ENCODE measurements at regions of chr16 and their contacts with region 1.

Region 1: GRCh38 chr16:57899771-57900661 is 70.9 kb downstream of the CNGB1 start:
- DNase-seq: peak; percentile 59 to 89 (median 82)
- ATAC-seq: peak; percentile 76
- H3K4me3 ChIP-seq: no peak overlapping the region
- H3K4me3 Mint-ChIP-seq: no peak overlapping the region
- H3K27ac ChIP-seq: no peak overlapping the region
- H3K27ac Mint-ChIP-seq: no peak overlapping the region
- H3K4me1 ChIP-seq: no peaks in the 10 kb centered on the region
- H3K4me1 Mint-ChIP-seq: peaks cover 3% of the 10 kb centered on the region
- H3K27me3 ChIP-seq: no peaks in the 10 kb centered on the region
- H3K27me3 Mint-ChIP-seq: peaks cover 20% of the 10 kb centered on the region
- CTCF ChIP-seq: peak; percentile 92

Region 2: GRCh38 chr16:58299757-58300349 is 399.8 kb after region 1 on chr16:
- CTCF ChIA-PET with region 1: no interaction called
- POLR2A ChIA-PET with region 1: no interaction called
- intact Hi-C with region 1: loop called in 1 of 2 experiments (anchors 5 kb)
- DNase-seq: peak in 3 of 9 experiments; percentile 11 to 33 (median 22)
- ATAC-seq: no peak
- H3K4me3 ChIP-seq: no peak overlapping the region
- H3K4me3 Mint-ChIP-seq: no peak overlapping the region
- H3K27ac ChIP-seq: no peak overlapping the region
- H3K27ac Mint-ChIP-seq: no peak overlapping the region
- H3K4me1 ChIP-seq: no peaks in the 10 kb centered on the region
- H3K4me1 Mint-ChIP-seq: no peaks in the 10 kb centered on the region
- H3K27me3 ChIP-seq: no peaks in the 10 kb centered on the region
- H3K27me3 Mint-ChIP-seq: peaks cover 12% of the 10 kb centered on the region
- CTCF ChIP-seq: peak; percentile 28

Region 3: DNA sequence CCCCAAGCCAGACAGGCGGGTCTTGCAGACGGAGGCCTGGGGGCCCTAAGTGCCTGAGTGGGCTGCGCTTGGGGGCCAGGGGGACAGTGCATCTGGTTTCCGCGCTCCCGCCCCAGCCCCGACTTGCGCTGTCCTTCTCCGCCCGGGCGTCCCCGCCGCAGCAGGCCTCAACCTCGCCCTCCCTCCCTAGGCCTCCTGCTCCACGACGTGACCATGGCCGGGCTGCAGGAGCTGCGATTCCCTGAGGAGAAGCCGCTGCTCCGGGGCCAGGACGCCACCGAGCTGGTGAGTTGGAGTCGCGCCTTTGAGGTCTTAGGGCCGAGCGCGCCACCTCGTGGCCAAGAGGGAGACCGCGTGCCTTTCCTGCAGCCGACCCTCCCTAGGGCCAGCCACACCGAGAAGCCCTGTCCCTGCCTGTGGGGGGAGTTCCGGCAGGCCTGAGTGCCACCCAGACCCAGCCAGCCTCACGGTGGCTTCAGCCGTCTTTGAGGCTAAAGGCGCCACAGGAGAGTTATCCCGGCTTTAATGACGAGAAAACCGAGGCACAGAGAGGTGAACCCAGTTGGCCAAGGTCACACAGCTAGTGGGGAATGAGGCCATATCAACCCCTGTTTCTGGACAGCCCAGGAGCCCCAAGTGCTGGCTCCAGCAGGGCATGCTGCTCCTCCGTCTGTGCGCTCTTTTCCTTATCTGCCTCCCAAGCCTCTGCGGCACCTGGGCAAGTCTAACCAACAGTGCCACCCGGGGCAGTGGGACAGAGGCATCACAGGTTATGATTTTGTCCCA is 587.7 kb after region 1 on chr16:
- CTCF ChIA-PET with region 1: no interaction called
- POLR2A ChIA-PET with region 1: no interaction called
- intact Hi-C with region 1: loop called in 1 of 2 experiments (anchors 2 kb)
- DNase-seq: peak; percentile 42 to 83 (median 73)
- ATAC-seq: peak; percentile 83
- H3K4me3 ChIP-seq: no peak overlapping the region
- H3K4me3 Mint-ChIP-seq: no peak overlapping the region
- H3K27ac ChIP-seq: no peak overlapping the region
- H3K27ac Mint-ChIP-seq: no peak overlapping the region
- H3K4me1 ChIP-seq: no peaks in the 10 kb centered on the region
- H3K4me1 Mint-ChIP-seq: no peaks in the 10 kb centered on the region
- H3K27me3 ChIP-seq: peaks cover 0 to 7% of the 10 kb centered on the region in 2 experiments
- H3K27me3 Mint-ChIP-seq: peaks cover 3% of the 10 kb centered on the region
- CTCF ChIP-seq: peak; percentile 85